ENCODE measurements at regions of chr17 and their contacts with region 1.

Region 1: GRCh38 chr17:40531051-40531991 is 29.9 kb upstream of the TNS4 start:
- DNase-seq: peak in 6 of 9 donors; percentile 39 to 84 (median 66)
- ATAC-seq: peak; percentile 14
- H3K4me3 ChIP-seq: peak overlapping the region; percentile 15
- H3K4me3 Mint-ChIP-seq: peak overlapping the region in 8 of 10 donors; percentile 0 to 78 (median 48)
- H3K27ac ChIP-seq: no peak overlapping the region
- H3K27ac Mint-ChIP-seq: peak overlapping the region; percentile 72 to 99 (median 92)
- H3K4me1 ChIP-seq: peaks cover 63 to 67% of the 10 kb centered on the region in 2 donors
- H3K4me1 Mint-ChIP-seq: peaks cover 47 to 90% (median 70%) of the 10 kb centered on the region in 7 donors
- H3K27me3 ChIP-seq: no peaks in the 10 kb centered on the region
- H3K27me3 Mint-ChIP-seq: peaks cover 0 to 3% (median 0%) of the 10 kb centered on the region in 5 donors

Region 2: GRCh38 chr17:40355123-40355803 is 176.1 kb before region 1 on chr17:
- CTCF ChIA-PET with region 1: interaction called, 25 read pairs
- POLR2A ChIA-PET with region 1: interaction called, 7 read pairs
- intact Hi-C with region 1: loop called (anchors 1 kb)
- DNase-seq: peak; percentile 63 to 93 (median 78)
- ATAC-seq: peak; percentile 86
- H3K4me3 ChIP-seq: no peak overlapping the region
- H3K4me3 Mint-ChIP-seq: peak overlapping the region in 1 of 10 donors; percentile 32
- H3K27ac ChIP-seq: no peak overlapping the region
- H3K27ac Mint-ChIP-seq: peak overlapping the region in 5 of 9 donors; percentile 6 to 69 (median 32)
- H3K4me1 ChIP-seq: no peaks in the 10 kb centered on the region
- H3K4me1 Mint-ChIP-seq: peaks cover 8 to 25% (median 18%) of the 10 kb centered on the region in 7 donors
- H3K27me3 ChIP-seq: no peaks in the 10 kb centered on the region
- H3K27me3 Mint-ChIP-seq: peaks cover 0 to 5% (median 0%) of the 10 kb centered on the region in 5 donors

Region 3: DNA sequence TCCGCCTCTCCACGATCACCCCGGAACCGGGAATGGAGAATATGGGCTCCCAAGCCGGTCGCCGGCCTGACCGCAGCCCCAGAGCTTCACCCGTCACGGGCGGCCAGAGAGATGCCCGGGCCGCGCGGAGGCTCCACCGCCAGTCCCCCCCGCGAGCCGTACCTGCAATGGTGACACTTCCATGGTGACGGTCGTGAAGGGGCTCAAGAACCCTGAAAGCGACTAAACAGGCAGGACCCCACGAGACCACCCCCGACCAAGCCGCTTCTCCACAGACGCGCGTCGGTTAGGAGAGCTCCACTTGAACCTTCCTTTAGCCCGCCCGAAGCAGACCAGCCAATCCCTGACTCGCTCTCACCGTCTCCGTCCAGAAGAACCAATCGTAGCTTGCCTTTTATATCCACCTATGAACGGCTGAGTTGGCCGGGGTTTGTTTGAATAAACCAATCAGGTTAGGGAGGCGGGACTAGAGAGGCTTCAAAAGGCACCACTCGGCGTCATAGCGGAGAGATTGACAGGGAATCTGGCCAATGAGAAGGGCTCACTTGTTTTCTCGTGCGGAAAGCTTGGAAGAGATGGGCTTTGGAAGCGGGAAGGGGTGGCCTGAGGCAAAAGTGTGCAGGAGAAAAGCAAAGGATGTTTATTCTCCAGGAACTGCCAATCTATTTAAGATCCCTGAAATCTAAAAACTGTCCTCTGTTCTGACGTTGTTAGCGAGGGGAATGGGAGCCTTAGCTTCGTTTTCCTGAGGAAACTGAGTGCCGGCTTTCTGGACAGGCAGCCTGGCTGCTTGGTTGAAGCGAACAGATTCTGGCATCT is 113.5 kb before region 1 on chr17 and contains the start of gene TOP2A:
- CTCF ChIA-PET with region 1: interaction called, 34 read pairs
- POLR2A ChIA-PET with region 1: interaction called, 10 read pairs
- intact Hi-C with region 1: loop called (anchors 1 kb)
- DNase-seq: peak; percentile 92 to 98 (median 98)
- ATAC-seq: peak; percentile 100
- H3K4me3 ChIP-seq: peak within 1 kb of the TSS; percentile 96
- H3K4me3 Mint-ChIP-seq: peak within 1 kb of the TSS; percentile 87 to 99 (median 92)
- H3K27ac ChIP-seq: peak within 1 kb of the TSS; percentile 71
- H3K27ac Mint-ChIP-seq: peak within 1 kb of the TSS; percentile 75 to 97 (median 90)
- H3K4me1 ChIP-seq: peaks cover 0 to 16% of the 10 kb centered on the region in 2 donors
- H3K4me1 Mint-ChIP-seq: peaks cover 6 to 41% (median 23%) of the 10 kb centered on the region in 7 donors
- H3K27me3 ChIP-seq: peaks cover 0 to 5% of the 10 kb centered on the region in 2 donors
- H3K27me3 Mint-ChIP-seq: peaks cover 0 to 2% (median 0%) of the 10 kb centered on the region in 5 donors
- total RNA-seq, gene TOP2A: 0.54 to 273 (median 1.2) TPM

Region 4: GRCh38 chr17:40456396-40456951 is 74.8 kb before region 1 on chr17:
- CTCF ChIA-PET with region 1: interaction called, 10 read pairs
- POLR2A ChIA-PET with region 1: interaction called, 3 read pairs
- intact Hi-C with region 1: no loop called
- DNase-seq: no peak
- ATAC-seq: no peak
- H3K4me3 ChIP-seq: no peak overlapping the region
- H3K4me3 Mint-ChIP-seq: no peak overlapping the region
- H3K27ac ChIP-seq: no peak overlapping the region
- H3K27ac Mint-ChIP-seq: no peak overlapping the region
- H3K4me1 ChIP-seq: no peaks in the 10 kb centered on the region
- H3K4me1 Mint-ChIP-seq: peaks cover 0 to 8% (median 0%) of the 10 kb centered on the region in 7 donors
- H3K27me3 ChIP-seq: no peaks in the 10 kb centered on the region
- H3K27me3 Mint-ChIP-seq: no peaks in the 10 kb centered on the region

Region 5: DNA sequence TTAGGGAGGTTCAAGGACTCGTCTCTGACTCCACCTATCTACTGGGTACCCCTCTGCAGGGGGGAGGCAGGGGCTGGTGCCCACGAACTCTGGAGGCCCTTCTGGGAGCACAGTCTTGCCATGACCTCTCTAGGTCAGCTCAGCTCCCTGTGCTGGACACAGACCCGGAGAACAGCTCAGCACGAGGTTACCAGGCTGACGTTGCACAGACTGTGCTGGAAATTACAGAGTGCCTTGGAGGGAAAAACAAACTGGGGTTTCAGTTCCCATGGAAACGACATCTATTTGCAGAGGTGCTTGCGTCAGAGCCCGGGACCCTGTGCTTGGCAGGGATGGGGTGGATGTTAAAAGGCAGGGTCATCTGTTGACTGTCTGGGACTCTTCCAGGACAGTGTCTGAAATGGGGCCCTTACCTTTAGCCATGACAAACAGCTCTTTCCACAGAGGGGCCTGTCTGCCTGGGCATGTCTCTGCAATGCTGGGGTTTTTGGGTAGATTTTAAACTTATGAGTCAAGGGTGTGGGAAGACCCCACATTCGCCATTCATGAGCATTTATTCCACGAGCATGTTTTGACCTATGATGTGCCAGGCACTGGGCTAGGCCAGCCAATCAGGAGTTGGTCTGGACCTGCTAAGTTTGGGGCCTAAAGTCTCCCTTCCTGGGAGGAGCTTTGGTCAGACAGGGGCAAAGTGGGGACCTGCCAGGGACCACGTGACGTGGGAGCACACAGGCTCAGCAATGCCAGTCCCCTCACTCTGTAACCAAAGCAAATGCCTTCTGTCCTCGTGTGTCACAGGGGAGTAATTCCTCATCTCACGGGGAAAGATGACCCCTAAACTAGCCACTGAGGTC is 11.5 kb after region 1 on chr17:
- CTCF ChIA-PET with region 1: interaction called, 17 read pairs
- POLR2A ChIA-PET with region 1: interaction called, 1,524 read pairs
- intact Hi-C with region 1: loop called (anchors 1 kb)
- DNase-seq: peak in 3 of 9 donors; percentile 5 to 57 (median 57)
- ATAC-seq: no peak
- H3K4me3 ChIP-seq: no peak overlapping the region
- H3K4me3 Mint-ChIP-seq: peak overlapping the region; percentile 16 to 87 (median 67)
- H3K27ac ChIP-seq: peak overlapping the region; percentile 6
- H3K27ac Mint-ChIP-seq: peak overlapping the region; percentile 70 to 97 (median 92)
- H3K4me1 ChIP-seq: peaks cover 69 to 84% of the 10 kb centered on the region in 2 donors
- H3K4me1 Mint-ChIP-seq: peaks cover 60 to 94% (median 89%) of the 10 kb centered on the region in 7 donors
- H3K27me3 ChIP-seq: no peaks in the 10 kb centered on the region
- H3K27me3 Mint-ChIP-seq: no peaks in the 10 kb centered on the region

Region 6: DNA sequence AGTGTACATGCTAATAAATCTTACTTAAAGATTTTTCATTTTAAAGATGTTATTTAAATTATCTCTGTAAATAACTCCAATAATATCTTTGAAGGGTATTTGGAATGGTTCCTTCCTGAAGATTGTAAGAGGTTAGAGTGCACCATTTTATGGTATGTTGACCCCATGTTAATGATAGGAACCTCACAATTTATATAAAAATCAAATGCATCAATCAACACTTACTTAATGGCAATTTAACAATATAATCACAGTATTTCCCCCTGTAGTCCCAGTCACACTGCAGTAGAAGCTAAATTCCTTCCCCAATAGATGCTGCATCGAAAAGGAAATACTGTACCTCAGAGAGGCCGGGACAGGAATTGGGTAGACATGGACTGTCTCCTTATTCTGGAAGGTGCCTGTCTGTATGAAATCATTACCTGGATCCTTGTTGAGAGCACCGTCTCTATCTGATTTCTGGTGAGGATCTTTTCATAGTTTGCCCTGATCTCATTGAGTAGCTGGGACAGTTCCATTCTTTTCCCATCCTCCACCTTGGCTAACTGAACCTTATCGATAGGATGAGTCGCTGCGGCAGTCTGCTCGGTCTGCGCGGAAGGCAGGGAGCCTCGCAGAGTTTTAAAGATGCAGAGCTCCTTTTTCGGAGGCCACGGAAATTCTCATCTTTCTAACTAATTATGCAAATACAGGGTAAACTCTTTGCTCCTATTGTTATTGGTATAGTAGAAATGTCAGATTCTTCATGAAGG is 133.4 kb after region 1 on chr17 and contains the start of gene KRT222:
- CTCF ChIA-PET with region 1: no interaction called
- POLR2A ChIA-PET with region 1: no interaction called
- intact Hi-C with region 1: no loop called
- DNase-seq: no peak
- ATAC-seq: no peak
- H3K4me3 ChIP-seq: peak within 1 kb of the TSS; percentile 22
- H3K4me3 Mint-ChIP-seq: peak within 1 kb of the TSS in 9 of 10 donors; percentile 27 to 82 (median 58)
- H3K27ac ChIP-seq: no peak within 1 kb of the TSS
- H3K27ac Mint-ChIP-seq: peak within 1 kb of the TSS in 1 of 9 donors; percentile 17
- H3K4me1 ChIP-seq: peaks cover 0 to 5% of the 10 kb centered on the region in 2 donors
- H3K4me1 Mint-ChIP-seq: peaks cover 9 to 12% (median 11%) of the 10 kb centered on the region in 7 donors
- H3K27me3 ChIP-seq: peaks cover 0 to 3% of the 10 kb centered on the region in 2 donors
- H3K27me3 Mint-ChIP-seq: peaks cover 12 to 45% (median 25%) of the 10 kb centered on the region in 5 donors
- total RNA-seq, gene KRT222: not detected

Measured in naive thymus-derived CD4-positive, alpha-beta T cell (primary cell).